ENCODE measurements at regions of chr5 and their contacts with region 1.

Region 1: DNA sequence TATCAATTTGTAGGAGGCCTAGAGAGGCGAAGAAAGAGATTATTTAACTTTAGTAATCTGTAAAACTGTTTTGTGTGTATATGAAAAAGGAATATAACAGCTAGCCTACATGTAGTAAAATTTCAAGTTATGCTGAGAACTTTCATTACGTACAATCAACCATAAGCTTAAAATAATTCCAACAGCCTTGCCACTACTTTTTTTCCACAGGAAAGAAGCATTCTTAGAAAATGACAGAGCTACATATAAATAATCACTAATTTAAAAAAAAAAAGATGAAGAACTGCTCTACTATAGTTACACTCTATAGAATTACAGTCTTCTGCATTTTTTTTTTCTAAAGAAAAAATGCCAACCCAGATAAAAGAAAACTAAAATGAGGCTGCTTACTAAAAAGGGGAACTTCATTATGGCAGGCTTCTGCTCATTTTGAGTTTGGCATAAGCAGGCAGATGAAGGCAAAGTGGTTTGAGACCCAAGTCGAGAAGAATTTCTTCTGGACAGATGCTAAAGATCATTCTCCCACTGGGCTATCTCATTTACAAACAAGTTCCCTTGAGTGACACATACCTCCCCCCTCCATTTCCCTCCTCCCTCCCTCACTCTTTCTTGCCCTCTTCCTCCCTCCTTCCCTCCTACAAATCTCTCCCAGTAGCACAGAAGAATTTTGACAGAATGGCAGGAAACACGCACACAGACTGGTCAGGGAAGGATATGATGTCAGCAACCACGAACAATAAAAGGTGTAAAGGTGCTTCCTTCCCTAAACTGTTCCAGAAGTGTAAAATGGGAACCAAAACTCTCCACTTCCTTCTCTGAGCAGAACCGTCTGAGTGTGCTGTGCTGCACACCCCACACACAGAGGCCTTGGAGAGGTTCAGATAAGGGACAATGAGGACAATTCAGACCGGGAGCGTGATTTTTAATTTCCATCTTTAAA is 56.1 kb downstream of the MEF2C start:
- DNase-seq: peak; percentile 83

Region 2: DNA sequence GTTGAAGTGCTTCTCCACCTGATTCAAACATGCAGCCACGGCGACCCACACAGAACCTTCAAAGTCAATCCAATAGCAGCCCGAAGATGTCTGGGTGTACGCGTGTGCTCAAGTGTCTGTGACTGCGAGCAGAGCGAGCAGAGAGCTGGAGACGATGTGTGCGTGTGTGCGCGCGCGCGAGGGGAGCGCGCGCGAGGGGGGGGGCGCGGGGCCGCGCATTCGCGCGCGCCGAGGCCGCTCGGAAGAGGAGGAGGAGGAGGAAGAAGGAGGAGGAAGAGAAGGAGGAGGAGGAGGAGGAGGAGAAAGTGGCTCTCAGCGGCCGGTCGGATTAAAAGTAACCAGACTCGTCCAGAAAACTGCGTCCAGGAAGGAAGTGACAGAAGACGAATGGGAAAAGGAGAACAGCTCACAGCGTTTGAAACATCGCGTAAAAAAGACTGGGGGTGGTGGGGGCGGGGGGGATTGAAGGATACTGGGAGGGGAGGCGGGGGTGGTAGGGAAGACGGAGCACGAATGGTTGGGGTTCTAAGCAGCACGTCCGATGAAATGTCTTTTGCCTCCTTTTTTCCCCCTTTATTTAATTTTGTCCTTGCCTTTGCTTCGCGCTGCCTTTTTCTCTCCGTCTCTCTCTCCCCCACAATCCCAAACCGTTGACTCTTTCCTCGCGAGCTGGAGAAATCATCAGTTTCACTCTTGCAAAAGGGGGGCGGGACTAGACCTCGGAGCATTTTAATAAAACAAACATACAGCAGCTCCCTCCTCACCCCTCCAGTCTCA is 56.3 kb after region 1 on chr5 and contains the start of gene MEF2C:
- intact Hi-C with region 1: loop called (anchors 2 kb)
- DNase-seq: peak; percentile 87
- total RNA-seq, gene MEF2C: 64.6 TPM